ENCODE measurements at regions of chr9 and their contacts with region 1.

Region 1: GRCh38 chr9:71944475-71945375 is 33.3 kb downstream of the C9orf85 start:
- DNase-seq: no peak
- ATAC-seq: no peak
- H3K4me3 ChIP-seq: no peak overlapping the region
- H3K27ac ChIP-seq: no peak overlapping the region
- H3K4me1 ChIP-seq: peaks cover 2 to 5% of the 10 kb centered on the region in 2 donors
- H3K27me3 ChIP-seq: no peaks in the 10 kb centered on the region

Region 2: DNA sequence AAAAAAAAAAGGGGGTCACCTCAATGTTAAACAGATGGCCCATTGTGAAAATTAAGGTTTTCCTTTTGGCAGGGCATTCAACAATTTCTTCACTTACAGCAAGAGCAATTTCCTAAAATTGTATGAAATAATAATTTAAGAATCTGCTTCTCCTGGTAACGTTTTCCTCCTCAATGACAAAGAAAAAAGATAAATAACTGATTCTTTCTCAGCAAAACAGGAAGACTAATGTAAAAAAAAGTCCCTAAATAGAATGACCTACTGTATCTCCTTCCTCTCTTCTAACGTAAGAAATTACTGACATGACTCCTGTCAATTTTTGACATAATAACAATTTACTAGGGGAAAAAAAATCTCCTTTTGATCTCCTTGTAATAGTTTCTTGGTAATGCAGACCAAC is 59.3 kb before region 1 on chr9:
- intact Hi-C with region 1: loop called in 1 of 2 experiments (anchors 10 kb)
- DNase-seq: no peak
- ATAC-seq: no peak
- H3K4me3 ChIP-seq: no peak overlapping the region
- H3K27ac ChIP-seq: no peak overlapping the region
- H3K4me1 ChIP-seq: no peaks in the 10 kb centered on the region
- H3K27me3 ChIP-seq: no peaks in the 10 kb centered on the region

Region 3: GRCh38 chr9:72185561-72185960 is 240.8 kb after region 1 on chr9:
- intact Hi-C with region 1: no loop called
- DNase-seq: no peak
- ATAC-seq: no peak
- H3K4me3 ChIP-seq: no peak overlapping the region
- H3K27ac ChIP-seq: no peak overlapping the region
- H3K4me1 ChIP-seq: no peaks in the 10 kb centered on the region
- H3K27me3 ChIP-seq: no peaks in the 10 kb centered on the region

Measured in aorta (tissue), 5 donors.